ENCODE measurements at regions of chr9 and their contacts with region 1.

Region 1: GRCh38 chr9:1804128-1804865 is 210.8 kb upstream of the SMARCA2 start:
- DNase-seq: no peak
- ATAC-seq: no peak
- H3K4me3 ChIP-seq: no peak overlapping the region
- H3K27ac ChIP-seq: no peak overlapping the region
- H3K4me1 ChIP-seq: no peaks in the 10 kb centered on the region
- H3K27me3 ChIP-seq: no peaks in the 10 kb centered on the region
- CTCF ChIP-seq: no peak
- POLR2A ChIP-seq: no peak

Region 2: DNA sequence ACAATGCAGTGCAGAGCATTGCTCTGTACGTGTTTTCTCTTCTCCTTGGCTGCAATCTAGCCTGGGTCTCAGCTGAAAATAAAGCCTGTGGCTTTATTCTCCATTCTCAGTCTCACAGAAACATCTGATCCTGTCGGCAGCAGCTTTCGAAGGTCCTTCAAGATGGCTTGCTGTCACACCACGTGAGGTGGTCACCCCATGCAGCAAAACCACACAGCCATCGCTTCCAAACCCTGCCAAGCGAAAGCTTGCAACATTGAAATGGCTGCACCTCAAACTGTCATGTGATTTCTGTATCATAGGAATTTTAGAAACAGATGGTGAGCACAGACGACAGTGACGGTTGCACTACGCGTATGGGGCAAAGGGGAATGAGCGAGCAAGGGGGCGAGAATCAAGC is 112.4 kb after region 1 on chr9:
- in situ Hi-C with region 1: loop called in 1 of 4 experiments (anchors 25 kb)
- intact Hi-C with region 1: no loop called
- DNase-seq: no peak
- ATAC-seq: no peak
- H3K4me3 ChIP-seq: no peak overlapping the region
- H3K27ac ChIP-seq: no peak overlapping the region
- H3K4me1 ChIP-seq: no peaks in the 10 kb centered on the region
- H3K27me3 ChIP-seq: peaks cover 0 to 5% (median 0%) of the 10 kb centered on the region in 3 donors
- CTCF ChIP-seq: no peak
- POLR2A ChIP-seq: no peak

Region 3: DNA sequence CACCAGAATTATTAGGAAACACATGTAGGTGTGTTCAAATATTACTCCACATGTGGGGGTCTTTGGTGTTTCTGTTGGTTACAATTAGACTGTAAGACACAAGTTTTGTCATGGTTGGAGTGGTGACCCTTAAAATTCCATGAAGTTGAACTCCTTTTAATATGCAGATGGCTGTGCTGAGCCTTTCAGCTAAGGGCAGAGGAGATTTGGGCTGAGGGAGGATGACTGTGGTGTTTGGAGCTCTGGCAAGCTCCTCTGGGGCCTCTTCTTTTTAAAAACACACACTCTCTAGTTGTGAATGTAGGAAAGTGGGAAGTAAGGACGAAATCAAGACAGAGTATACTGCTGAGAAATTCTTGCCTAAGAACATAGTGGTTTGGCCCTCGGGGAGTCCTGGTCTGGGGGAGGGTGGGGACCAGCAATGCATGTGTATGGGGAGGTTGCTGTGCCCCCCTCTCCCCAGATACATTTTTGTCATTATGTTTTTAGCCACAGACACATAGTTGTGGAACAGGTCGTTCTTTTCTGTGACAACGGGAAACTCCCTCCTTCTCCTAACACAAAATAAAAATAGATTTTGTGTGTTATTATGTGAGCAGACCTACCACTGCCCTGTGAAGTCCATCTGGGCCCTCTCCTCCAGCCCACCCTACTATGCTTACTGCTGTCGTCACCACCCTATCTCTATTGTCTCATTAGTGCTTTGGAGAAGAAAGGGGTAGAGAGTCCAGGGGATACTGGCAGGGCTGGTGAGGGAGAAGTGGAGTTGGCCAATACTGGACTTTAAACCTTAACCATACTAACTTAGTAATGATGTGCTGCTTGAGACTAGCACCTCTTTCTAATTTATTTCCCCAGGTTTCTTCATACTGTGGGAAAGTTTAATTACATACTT is 220.8 kb after region 1 on chr9:
- in situ Hi-C with region 1: no loop called
- intact Hi-C with region 1: no loop called
- DNase-seq: no peak
- ATAC-seq: peak; percentile 31 to 41
- H3K4me3 ChIP-seq: no peak overlapping the region
- H3K27ac ChIP-seq: peak overlapping the region; percentile 31 to 97 (median 65)
- H3K4me1 ChIP-seq: peaks cover 96 to 97% of the 10 kb centered on the region in 2 donors
- H3K27me3 ChIP-seq: no peaks in the 10 kb centered on the region
- CTCF ChIP-seq: no peak
- POLR2A ChIP-seq: peak in 1 of 2 donors; percentile 16

Measured in gastrocnemius medialis (tissue), 4 donors.